ENCODE measurements at regions of chr1 and their contacts with region 1.

Region 1: DNA sequence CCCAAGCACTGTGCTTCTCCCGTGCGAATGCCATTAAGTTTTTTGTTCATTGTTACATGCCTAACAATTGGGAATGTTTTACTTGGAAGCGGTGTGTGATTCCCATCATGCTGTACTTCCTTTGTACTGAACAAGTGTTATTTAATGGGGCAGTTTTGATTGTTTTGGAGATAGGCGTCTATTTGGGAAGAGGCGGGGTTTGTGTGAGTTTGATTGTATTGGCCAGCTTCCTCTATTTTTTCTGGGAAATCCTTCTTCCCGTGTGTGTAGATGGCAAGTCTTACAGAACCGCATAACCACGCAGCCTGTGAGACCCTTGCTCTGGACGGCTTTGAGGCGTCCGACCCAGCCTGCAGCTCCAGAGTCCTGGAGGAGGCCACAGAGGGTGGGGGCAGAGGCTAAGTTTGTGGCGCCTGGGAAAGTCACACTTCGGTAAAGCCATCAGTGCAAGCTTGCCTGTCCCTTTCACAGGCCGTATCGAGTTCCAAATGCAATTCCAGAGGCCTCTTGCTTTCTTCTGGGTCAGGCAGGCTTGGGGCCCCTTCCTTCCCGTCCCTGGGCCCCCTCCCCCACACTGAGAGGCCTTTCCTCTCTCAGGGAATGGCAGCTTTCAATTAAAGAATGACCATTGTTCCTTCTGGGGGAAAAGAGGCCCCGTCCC is 210.3 kb downstream of the TOMM20 start:
- DNase-seq: peak; percentile 99
- H3K4me3 ChIP-seq: no peak overlapping the region
- H3K27ac ChIP-seq: peak overlapping the region; percentile 95
- H3K4me1 ChIP-seq: peaks cover 40% of the 10 kb centered on the region
- H3K27me3 ChIP-seq: no peaks in the 10 kb centered on the region
- CTCF ChIP-seq: no peak
- POLR2A ChIP-seq: peak; percentile 77

Region 2: DNA sequence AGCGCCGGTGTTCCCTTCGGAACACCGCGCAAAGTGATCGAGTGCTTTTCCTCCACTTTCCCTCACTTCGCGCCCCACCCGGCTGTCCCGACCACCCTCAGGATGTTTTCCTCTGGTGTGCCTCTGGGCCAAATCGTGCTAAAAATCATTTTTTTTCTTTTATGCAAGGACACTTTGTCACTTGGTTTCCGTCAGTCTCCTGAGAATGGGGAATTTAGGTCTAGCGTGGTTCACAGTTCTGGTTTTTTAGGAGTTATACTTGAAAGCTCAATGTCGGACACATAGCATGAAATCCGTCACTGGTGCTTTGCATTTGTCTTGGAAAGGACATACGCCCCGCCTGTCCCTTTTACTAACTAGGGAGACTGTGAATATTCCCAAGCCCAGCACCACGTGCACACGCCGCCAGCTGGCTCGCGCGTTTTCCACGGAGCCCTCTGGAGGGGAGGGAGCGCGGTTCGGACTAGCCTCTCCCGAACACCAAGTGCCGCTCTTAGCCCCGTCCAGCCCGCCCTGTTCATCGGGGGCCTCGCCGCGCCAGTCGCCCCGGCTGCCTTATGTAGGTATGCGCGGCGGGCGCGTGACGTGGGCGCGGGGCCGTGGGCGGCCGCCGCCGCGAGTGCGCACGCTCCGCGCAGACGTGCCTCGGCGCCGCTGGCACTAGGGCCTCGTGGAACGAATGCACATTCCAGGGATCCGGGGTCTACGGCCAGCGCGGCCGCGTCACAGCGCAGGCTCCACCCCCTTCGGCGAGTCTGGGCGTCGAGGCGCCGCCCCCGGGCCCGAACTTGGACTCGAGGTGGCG is 307.8 kb before region 1 on chr1:
- CTCF ChIA-PET with region 1: no interaction called
- POLR2A ChIA-PET with region 1: interaction called, 3 read pairs
- dilution Hi-C with region 1: no loop called
- intact Hi-C with region 1: loop called (anchors 1 kb)
- DNase-seq: peak; percentile 95
- H3K4me3 ChIP-seq: peak overlapping the region; percentile 17 to 78 (median 57)
- H3K27ac ChIP-seq: peak overlapping the region; percentile 99
- H3K4me1 ChIP-seq: peaks cover 37% of the 10 kb centered on the region
- H3K27me3 ChIP-seq: no peaks in the 10 kb centered on the region
- CTCF ChIP-seq: peak in 1 of 2 donors; percentile 14
- POLR2A ChIP-seq: peak; percentile 10

Region 3: DNA sequence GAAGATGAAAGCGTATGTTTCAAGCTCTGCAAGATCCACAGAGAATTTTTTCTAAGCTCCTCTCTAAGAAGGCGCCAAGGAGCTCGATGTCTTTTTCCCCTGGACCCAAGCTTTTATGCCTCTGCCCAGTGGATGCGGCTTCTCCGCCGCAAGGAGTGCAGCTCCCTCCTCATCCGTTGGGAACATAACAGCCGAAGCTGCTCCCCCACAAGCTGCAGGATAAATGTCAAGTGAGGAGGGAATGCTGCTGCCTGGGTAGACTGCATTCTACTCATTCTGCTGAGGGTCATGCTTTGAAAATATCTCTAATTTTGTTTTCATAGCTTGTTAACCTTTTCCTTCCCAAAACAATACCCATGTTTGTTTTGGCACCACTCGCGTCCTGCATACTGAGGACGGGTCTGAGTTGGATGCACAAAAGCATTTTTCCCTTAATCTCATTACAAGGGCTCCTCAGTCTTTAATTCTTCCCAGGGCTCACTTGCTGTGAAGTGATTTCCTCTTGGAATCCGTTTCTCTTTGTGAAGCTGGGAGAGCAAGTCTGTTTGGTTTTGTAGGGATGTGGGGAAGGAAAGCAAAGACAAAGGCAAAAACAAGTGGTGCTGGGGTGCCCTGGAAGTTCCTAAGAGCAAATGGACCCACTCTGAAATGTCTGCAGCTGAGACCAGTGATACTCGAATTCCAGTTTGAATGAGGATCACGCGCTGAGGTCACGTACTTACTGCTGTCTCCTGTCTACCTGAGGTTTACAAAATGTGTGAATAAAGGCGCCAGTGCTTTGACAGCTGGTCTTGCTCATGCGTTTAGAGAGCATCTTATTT is 174.3 kb before region 1 on chr1:
- CTCF ChIA-PET with region 1: interaction called, 3 read pairs
- POLR2A ChIA-PET with region 1: interaction called, 4 read pairs
- dilution Hi-C with region 1: no loop called
- intact Hi-C with region 1: loop called (anchors 1 kb)
- DNase-seq: peak; percentile 99
- H3K4me3 ChIP-seq: peak overlapping the region in 1 of 3 experiments; percentile 7
- H3K27ac ChIP-seq: peak overlapping the region; percentile 88
- H3K4me1 ChIP-seq: peaks cover 36% of the 10 kb centered on the region
- H3K27me3 ChIP-seq: no peaks in the 10 kb centered on the region
- CTCF ChIP-seq: peak in 1 of 2 donors; percentile 15
- POLR2A ChIP-seq: peak; percentile 91

Region 4: DNA sequence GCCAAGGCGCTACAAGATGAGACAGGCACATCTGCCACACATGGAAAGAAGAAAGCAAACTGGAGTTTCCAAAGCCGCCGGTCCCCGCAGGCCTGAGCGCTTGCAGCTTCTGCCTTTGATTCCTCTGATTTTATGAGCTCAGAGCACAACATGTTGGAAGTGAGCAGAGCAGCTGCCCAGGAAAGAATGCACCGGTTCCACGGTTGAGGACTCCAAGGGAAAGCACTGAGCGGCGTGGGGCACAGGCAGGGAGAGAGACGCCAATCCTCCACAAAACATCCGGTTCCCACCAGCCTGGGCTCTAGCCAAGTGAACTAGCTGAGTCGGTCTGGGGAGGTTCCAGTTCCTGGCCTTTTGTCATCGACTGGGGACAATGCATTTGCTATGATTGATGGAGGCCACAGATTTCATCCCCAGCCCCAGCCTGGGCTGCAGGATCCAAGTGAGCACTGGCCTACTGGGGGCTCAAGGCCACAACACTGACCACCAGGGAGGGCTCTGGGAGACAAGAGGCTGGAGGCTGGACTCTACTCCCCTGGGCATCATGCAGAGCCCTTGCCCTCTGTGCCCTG is 55.3 kb before region 1 on chr1:
- CTCF ChIA-PET with region 1: no interaction called
- POLR2A ChIA-PET with region 1: no interaction called
- dilution Hi-C with region 1: no loop called
- intact Hi-C with region 1: loop called (anchors 1 kb)
- DNase-seq: peak; percentile 96
- H3K4me3 ChIP-seq: no peak overlapping the region
- H3K27ac ChIP-seq: peak overlapping the region; percentile 85
- H3K4me1 ChIP-seq: peaks cover 46% of the 10 kb centered on the region
- H3K27me3 ChIP-seq: no peaks in the 10 kb centered on the region
- CTCF ChIP-seq: no peak
- POLR2A ChIP-seq: no peak

Region 5: DNA sequence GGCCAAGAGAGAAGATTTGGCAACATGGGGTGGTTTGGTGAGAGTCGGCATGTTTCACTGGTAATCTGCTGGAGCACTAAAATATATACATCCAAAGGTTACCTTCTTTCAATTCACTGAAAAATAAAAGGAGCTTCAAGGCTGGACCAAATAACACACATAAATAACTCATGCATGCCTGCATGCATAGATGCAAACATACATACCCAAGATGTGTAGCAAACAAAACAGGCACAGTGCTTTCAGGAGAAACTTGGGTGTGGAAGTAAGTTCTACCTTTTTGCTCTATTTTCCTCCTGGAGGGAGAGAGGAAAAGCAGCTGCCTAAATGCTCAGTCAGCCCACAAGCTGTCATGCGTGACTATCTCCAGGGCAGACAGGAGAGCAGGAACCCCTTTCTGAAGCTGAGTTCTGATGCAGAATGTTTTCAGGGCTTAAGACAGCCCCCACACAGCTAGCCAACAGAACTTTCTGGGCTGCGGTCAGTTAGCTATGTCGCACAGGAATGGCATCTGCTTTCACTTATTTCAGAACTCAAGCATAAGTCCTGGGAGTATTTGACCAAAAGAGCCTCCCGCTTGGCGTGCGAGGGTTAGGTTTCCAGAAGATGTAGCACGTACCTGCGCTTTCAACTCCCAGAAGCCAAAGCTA is 44.2 kb after region 1 on chr1:
- CTCF ChIA-PET with region 1: interaction called, 4 read pairs
- POLR2A ChIA-PET with region 1: no interaction called
- dilution Hi-C with region 1: no loop called
- intact Hi-C with region 1: loop called (anchors 2 kb)
- DNase-seq: no peak
- H3K4me3 ChIP-seq: no peak overlapping the region
- H3K27ac ChIP-seq: peak overlapping the region; percentile 3
- H3K4me1 ChIP-seq: peaks cover 34% of the 10 kb centered on the region
- H3K27me3 ChIP-seq: no peaks in the 10 kb centered on the region
- CTCF ChIP-seq: no peak
- POLR2A ChIP-seq: no peak

Region 6: GRCh38 chr1:234987415-234988154 is 69.3 kb after region 1 on chr1:
- CTCF ChIA-PET with region 1: no interaction called
- POLR2A ChIA-PET with region 1: no interaction called
- dilution Hi-C with region 1: no loop called
- intact Hi-C with region 1: loop called (anchors 1 kb)
- DNase-seq: peak; percentile 98
- H3K4me3 ChIP-seq: no peak overlapping the region
- H3K27ac ChIP-seq: peak overlapping the region; percentile 100
- H3K4me1 ChIP-seq: peaks cover 47% of the 10 kb centered on the region
- H3K27me3 ChIP-seq: no peaks in the 10 kb centered on the region
- CTCF ChIP-seq: no peak
- POLR2A ChIP-seq: no peak

Region 7: DNA sequence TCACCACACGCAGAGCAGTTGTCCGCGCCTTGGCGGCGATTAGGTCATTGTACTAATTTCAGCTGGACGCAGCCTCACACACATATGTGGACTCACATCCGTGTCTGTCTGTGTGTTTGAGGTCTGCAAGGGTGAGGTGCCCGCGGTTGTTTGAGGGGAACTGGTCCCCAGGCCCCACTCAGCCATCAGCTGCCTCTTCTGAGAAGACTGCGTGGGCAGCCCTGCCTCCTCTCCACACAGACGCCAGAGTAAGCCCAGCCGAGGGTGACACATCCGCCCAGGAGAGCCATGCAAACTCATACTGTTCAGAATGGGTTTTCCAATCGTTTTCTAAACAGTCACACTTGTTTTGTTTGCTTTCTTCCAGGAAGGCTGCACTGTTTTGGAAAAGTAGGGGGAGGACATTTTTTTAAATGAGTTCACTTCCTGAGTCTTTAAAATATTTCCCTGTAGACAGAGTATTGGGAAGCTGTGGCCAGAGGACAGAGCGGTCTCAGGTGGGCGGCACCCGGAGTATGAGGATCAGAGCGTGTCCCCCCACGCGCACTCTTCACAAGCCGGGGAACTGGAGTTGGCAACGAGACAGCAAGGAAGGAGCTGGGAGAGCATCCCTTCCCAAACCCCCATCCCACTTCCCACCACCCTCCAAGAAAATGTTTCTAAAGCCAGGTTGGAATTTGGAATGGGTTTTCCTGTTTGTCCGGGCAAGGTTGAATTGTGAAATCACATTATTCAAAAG is 157.0 kb after region 1 on chr1:
- CTCF ChIA-PET with region 1: no interaction called
- POLR2A ChIA-PET with region 1: no interaction called
- dilution Hi-C with region 1: no loop called
- intact Hi-C with region 1: loop called (anchors 1 kb)
- DNase-seq: peak; percentile 92
- H3K4me3 ChIP-seq: no peak overlapping the region
- H3K27ac ChIP-seq: peak overlapping the region; percentile 95
- H3K4me1 ChIP-seq: peaks cover 33% of the 10 kb centered on the region
- H3K27me3 ChIP-seq: no peaks in the 10 kb centered on the region
- CTCF ChIP-seq: no peak
- POLR2A ChIP-seq: peak; percentile 58

Region 8: GRCh38 chr1:235336903-235337302 is 418.6 kb after region 1 on chr1:
- CTCF ChIA-PET with region 1: no interaction called
- POLR2A ChIA-PET with region 1: no interaction called
- dilution Hi-C with region 1: no loop called
- intact Hi-C with region 1: no loop called
- DNase-seq: no peak
- H3K4me3 ChIP-seq: no peak overlapping the region
- H3K27ac ChIP-seq: no peak overlapping the region
- H3K4me1 ChIP-seq: no peaks in the 10 kb centered on the region
- H3K27me3 ChIP-seq: no peaks in the 10 kb centered on the region
- CTCF ChIP-seq: no peak
- POLR2A ChIP-seq: no peak